HCT116 (cell line): ENCODE measurements at regions of chr10 and their contacts with region 1.

Region 1: DNA sequence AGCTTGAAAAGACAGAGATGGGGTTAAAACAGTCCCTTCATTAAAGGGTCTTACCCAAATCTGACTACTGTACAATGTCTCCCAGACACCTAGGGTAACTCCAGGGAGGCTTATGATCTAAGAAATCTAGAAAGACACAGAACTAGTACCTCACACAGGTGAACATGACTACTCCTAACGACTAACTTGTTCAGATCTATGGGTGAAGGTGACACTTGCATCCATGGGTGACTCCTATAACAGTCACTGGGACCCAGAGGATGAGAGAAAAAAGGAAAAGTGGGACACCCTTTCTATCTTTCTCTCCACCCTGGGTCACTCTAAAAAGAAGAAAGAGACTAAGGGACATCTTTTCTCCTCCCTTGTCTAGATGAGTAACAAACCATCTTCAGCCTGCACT is 19.2 kb downstream of the AKR1C8 start:
- DNase-seq: peak; percentile 2
- ATAC-seq: no peak
- H3K4me3 ChIP-seq: no peak overlapping the region
- H3K27ac ChIP-seq: no peak overlapping the region
- H3K4me1 ChIP-seq: no peaks in the 10 kb centered on the region
- H3K27me3 ChIP-seq: no peaks in the 10 kb centered on the region
- CTCF ChIP-seq: no peak
- POLR2A ChIP-seq: no peak
- RAD21 ChIP-seq: no peak

Region 2: DNA sequence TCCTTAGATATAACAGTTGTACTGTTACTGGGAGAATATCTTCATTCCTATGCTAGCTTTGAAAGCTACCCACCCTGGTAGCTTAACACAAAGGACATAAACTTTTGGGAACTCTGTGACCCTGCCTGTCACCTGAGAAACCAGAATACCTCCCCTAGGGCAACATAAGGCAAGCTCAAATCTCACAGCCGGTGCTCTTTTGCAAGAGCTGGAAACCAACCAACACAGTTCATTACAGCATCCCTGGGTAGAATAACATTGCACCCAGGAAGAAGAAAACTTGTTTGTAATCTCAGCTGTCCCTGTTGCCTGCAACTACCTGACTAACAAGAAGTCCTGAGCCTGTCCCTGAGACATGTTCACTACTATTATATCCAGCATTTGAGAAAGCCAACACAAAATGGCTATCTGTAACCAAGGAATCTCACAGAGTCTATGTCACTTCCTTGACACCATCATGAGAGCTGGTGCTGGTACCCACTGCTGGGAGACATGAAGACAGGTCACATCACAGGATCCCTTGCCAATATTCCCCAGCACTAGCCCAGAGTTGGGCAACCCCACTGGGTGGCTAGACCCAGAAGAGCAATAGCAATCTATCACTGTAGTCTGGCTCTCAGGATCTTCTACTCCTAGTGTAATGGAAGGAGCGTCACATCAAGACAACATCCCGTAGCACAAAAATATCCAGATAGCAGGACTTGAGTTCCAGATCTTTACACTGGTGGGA is 40.3 kb before region 1 on chr10:
- CTCF ChIA-PET with region 1: no interaction called
- POLR2A ChIA-PET with region 1: no interaction called
- RAD21 ChIA-PET with region 1: no interaction called
- intact Hi-C with region 1: loop called (anchors 5 kb)
- DNase-seq: no peak
- ATAC-seq: no peak
- H3K4me3 ChIP-seq: no peak overlapping the region
- H3K27ac ChIP-seq: no peak overlapping the region
- H3K4me1 ChIP-seq: no peaks in the 10 kb centered on the region
- H3K27me3 ChIP-seq: no peaks in the 10 kb centered on the region
- CTCF ChIP-seq: no peak
- POLR2A ChIP-seq: no peak
- RAD21 ChIP-seq: no peak